OCI-LY7 (cell line): ENCODE measurements at regions of chr7 and their contacts with region 1.

Region 1: GRCh38 chr7:24572997-24573625 is at the start of gene PALS2:
- DNase-seq: peak; percentile 88
- H3K4me3 ChIP-seq: peak within 1 kb of the TSS; percentile 96
- H3K27ac ChIP-seq: peak within 1 kb of the TSS; percentile 64
- H3K4me1 ChIP-seq: peaks cover 36% of the 10 kb centered on the region
- CTCF ChIP-seq: no peak
- total RNA-seq, gene PALS2: 26.3 and 45.1 TPM in 2 replicates

Region 2: DNA sequence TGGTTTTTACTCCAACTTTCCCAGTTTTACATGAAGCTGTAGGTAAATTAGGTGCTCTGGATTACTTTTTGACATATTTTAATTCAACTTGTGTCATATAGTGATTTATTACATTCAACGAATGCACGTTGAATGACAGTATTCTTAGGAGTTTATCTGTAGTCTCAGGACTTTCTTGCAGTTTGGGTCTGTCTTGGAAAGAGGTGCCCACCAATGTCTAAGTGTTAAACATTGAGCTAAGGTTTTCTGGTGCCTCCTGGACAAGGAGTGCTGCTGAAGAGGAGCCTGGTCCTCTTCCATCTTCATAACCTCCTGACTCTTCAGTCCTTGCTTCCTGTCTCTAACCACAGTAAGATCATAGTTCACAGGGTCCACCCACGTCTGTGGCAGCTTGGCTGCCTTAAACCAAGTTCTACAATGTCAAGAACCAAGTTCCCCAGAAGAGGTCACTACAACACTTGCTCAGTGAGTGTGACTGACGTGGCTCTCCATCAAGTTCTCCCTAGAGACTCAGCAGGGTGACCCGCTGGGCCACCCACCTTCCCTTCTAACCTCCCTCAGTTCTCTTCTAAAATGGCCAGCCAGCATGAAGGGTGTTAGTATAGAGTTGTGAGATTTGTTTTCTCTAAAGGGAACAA is 283.0 kb before region 1 on chr7:
- CTCF ChIA-PET with region 1: no interaction called
- POLR2A ChIA-PET with region 1: no interaction called
- intact Hi-C with region 1: loop called (anchors 5 kb)
- DNase-seq: peak; percentile 90
- H3K4me3 ChIP-seq: no peak overlapping the region
- H3K27ac ChIP-seq: no peak overlapping the region
- H3K4me1 ChIP-seq: peaks cover 11% of the 10 kb centered on the region
- CTCF ChIP-seq: peak; percentile 91

Region 3: GRCh38 chr7:24325708-24326107 is 247.4 kb before region 1 on chr7:
- CTCF ChIA-PET with region 1: no interaction called
- POLR2A ChIA-PET with region 1: interaction called, 4 read pairs
- intact Hi-C with region 1: loop called (anchors 5 kb)
- DNase-seq: peak; percentile 93
- H3K4me3 ChIP-seq: peak overlapping the region; percentile 42
- H3K27ac ChIP-seq: peak overlapping the region; percentile 89
- H3K4me1 ChIP-seq: peaks cover 81% of the 10 kb centered on the region
- CTCF ChIP-seq: no peak

Region 4: GRCh38 chr7:24501009-24501408 is 72.1 kb before region 1 on chr7:
- CTCF ChIA-PET with region 1: no interaction called
- POLR2A ChIA-PET with region 1: no interaction called
- intact Hi-C with region 1: no loop called
- DNase-seq: no peak
- H3K4me3 ChIP-seq: no peak overlapping the region
- H3K27ac ChIP-seq: no peak overlapping the region
- H3K4me1 ChIP-seq: no peaks in the 10 kb centered on the region
- CTCF ChIP-seq: no peak

Region 5: DNA sequence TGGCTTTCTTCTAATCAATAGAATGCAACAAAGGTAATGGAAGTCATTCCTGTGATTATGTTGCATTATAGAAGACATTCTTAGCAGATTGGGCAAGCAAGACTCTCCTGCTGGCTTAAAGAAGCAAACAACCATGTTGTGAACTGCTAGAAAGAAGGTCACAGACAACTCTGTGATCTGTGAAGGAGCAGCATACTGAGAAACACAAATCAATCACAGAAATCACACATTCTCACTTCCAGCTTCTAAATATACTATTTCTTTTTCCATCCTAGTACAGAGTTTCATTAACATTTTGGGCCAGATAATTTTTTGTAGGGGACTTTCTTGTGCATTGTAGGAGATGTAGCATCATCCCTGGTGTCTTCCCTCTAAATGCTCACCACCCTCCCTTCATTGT is 27.9 kb before region 1 on chr7:
- CTCF ChIA-PET with region 1: no interaction called
- POLR2A ChIA-PET with region 1: no interaction called
- intact Hi-C with region 1: no loop called
- DNase-seq: no peak
- H3K4me3 ChIP-seq: no peak overlapping the region
- H3K27ac ChIP-seq: no peak overlapping the region
- H3K4me1 ChIP-seq: no peaks in the 10 kb centered on the region
- CTCF ChIP-seq: no peak

Region 6: GRCh38 chr7:24793982-24794640 is 221.0 kb after region 1 on chr7:
- CTCF ChIA-PET with region 1: no interaction called
- POLR2A ChIA-PET with region 1: interaction called, 4 read pairs
- intact Hi-C with region 1: loop called (anchors 10 kb)
- DNase-seq: peak; percentile 39
- H3K4me3 ChIP-seq: peak overlapping the region; percentile 7
- H3K27ac ChIP-seq: peak overlapping the region; percentile 13
- H3K4me1 ChIP-seq: peaks cover 19% of the 10 kb centered on the region
- CTCF ChIP-seq: no peak